CD8-positive, alpha-beta memory T cell (primary cell): ENCODE measurements at regions of chr11 and their contacts with region 1.

Region 1: DNA sequence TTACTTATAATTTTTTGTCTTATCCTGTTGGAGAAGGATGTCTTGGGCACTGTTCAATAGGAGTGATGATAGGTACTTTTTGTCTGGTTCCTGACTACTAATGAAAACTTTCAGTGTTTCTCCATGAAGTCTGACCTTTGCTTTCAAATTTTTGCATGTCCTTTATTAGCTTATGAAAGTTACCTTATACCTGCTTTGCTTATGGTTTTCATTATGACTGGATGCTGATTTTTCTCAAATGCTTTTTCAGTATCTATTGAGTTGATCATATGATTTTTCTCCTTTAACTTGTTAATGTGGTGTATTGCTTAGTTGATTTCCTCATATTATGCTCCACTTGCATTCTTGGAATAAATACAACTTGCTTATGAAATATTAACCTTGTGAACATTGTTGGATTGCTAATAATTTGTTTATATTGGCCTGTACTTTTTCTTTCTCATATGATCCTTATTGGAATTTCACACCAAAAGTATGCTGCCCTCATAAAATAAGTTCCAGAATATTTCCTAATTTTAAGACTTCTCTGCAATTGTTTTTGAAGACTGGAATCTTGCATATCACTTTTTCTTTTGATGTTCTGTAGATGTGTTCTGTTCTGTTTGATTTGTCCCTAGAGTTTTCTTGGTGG is 85.0 kb upstream of the SC5D start:
- DNase-seq: no peak
- H3K4me3 ChIP-seq: no peak overlapping the region
- H3K4me3 Mint-ChIP-seq: no peak overlapping the region
- H3K27ac ChIP-seq: no peak overlapping the region
- H3K27ac Mint-ChIP-seq: no peak overlapping the region
- H3K4me1 ChIP-seq: no peaks in the 10 kb centered on the region
- H3K4me1 Mint-ChIP-seq: no peaks in the 10 kb centered on the region
- H3K27me3 ChIP-seq: no peaks in the 10 kb centered on the region
- H3K27me3 Mint-ChIP-seq: peaks cover 6 to 37% of the 10 kb centered on the region in 2 donors

Region 2: DNA sequence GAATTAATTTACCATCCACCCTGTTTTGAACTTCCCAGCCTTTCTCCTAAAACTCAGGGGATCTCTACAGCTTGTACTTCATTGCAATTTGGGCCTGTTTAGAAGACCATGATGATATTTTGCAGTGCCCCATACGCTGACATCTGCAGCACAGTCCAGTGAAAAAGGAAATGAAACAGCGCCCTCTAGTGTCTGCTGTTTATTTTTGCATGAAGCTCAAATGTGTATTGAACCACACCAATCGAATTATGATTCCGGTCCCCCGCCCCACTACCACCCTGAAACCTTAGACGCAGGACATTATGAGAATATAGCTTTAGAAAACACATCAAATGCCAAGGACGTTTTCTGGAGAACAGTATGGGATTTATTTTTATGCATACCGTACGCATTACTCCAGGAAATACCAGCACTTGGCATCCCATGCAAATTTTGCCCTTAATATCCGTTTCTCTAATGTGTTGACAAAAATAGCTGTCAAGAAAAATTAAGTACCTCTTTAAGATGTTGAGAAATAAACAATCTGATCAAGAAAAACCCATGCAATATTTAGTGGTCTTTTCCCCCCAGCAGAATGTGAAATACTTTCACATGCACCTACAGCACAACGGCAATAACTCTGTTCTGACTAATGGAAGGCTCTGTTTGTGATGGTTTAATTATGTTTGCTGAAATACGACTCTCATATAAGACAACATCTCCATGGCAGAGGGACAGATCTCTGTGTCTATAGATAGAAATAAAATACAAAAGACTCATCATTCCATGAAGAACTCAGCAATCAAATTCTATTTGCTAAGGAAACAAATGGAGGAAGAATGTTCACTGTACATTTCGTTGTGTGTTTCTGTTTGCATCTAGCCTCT is 12.6 kb before region 1 on chr11:
- CTCF ChIA-PET with region 1: interaction called, 15 read pairs
- POLR2A ChIA-PET with region 1: no interaction called
- DNase-seq: peak; percentile 17 to 63 (median 33)
- H3K4me3 ChIP-seq: no peak overlapping the region
- H3K4me3 Mint-ChIP-seq: no peak overlapping the region
- H3K27ac ChIP-seq: no peak overlapping the region
- H3K27ac Mint-ChIP-seq: no peak overlapping the region
- H3K4me1 ChIP-seq: no peaks in the 10 kb centered on the region
- H3K4me1 Mint-ChIP-seq: peaks cover 0 to 5% (median 3%) of the 10 kb centered on the region in 3 donors
- H3K27me3 ChIP-seq: peaks cover 8% of the 10 kb centered on the region
- H3K27me3 Mint-ChIP-seq: peaks cover 20 to 51% of the 10 kb centered on the region in 2 donors